ENCODE measurements at regions of chr5 and their contacts with region 1.

Region 1: GRCh38 chr5:143824851-143825720 is 13.1 kb downstream of the HMHB1 start:
- DNase-seq: peak; percentile 81
- ATAC-seq: peak; percentile 99

Region 2: DNA sequence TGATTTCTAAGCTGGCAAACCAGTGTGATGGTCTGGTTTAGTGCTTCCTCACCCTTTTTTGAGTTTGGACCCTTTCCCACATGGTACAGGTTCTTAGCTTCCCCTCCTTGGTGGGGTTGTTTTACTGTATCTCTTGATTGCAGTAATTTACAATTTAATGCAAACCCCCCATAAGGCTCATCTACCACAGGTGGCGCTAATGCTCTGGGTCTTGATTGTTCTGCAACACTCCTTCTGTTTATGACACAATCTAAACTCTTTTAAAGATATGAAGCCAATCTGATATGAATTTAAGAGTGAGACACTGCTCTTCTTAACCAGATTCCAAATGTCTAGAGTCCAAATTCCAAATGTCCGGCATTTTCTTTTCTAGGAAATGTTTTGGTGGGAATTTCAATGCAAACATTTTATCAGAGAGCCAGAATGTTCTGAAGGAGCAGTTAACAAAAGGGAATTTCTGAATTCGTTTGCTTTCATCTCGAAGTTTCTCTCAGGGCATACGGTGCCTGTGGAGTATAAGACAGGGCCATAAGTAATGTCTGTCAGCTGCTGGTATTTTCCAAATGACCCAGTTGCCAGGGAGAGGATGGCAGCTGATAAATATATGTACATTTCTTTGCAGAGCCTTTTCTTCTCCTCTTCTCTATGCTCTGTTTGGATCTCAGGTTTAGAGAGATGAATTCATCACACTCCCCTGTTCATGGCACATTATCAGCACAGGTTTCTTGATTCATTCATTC is 808.1 kb before region 1 on chr5:
- intact Hi-C with region 1: loop called (anchors 10 kb)
- DNase-seq: no peak
- ATAC-seq: no peak

Region 3: GRCh38 chr5:143074414-143074996 is 750.6 kb before region 1 on chr5:
- intact Hi-C with region 1: loop called (anchors 10 kb)
- DNase-seq: no peak
- ATAC-seq: no peak

Region 4: DNA sequence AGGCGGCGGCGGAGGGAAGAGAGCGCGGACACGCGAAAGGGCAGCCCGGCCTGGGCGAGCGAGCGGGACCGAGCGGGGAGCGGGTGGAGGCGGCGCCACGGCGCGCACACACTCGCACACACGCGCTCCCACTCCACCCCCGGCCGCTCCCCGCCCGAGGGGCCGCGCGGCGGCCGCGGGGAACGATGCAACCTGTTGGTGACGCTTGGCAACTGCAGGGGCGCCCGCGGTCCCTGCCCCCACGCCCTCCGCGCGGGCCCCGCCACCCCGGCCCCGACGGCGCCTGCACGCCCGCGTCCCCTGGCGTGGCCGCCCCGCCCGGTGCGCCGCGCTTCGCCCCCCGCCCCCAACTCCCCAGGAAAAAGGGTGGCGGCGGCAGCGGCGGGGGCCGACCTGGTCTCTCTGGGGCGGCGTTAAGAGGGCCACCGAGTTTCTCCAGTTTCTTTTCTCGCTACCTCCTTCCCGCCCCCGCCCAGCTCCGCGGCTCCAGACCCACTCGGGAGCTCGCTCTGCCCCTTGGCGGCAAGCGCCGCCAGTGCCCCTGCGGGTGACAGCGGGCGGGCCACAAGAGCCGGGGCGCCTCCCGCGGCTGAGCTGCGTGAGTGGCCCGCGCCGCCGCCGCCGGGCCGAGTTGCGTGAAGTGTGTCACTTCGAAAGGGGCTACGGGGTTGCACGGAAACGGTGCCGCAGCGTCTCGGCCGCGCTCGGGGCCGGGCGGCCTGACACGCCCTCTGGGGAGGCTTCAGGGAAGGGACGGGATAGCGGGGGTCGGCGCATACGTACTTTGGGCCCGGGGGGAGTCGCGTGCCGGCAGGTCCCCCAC is 421.3 kb before region 1 on chr5 and contains the start of gene NR3C1:
- intact Hi-C with region 1: loop called (anchors 10 kb)
- DNase-seq: peak; percentile 95
- ATAC-seq: peak; percentile 80
- total RNA-seq, gene NR3C1: 53.0 TPM

Region 5: DNA sequence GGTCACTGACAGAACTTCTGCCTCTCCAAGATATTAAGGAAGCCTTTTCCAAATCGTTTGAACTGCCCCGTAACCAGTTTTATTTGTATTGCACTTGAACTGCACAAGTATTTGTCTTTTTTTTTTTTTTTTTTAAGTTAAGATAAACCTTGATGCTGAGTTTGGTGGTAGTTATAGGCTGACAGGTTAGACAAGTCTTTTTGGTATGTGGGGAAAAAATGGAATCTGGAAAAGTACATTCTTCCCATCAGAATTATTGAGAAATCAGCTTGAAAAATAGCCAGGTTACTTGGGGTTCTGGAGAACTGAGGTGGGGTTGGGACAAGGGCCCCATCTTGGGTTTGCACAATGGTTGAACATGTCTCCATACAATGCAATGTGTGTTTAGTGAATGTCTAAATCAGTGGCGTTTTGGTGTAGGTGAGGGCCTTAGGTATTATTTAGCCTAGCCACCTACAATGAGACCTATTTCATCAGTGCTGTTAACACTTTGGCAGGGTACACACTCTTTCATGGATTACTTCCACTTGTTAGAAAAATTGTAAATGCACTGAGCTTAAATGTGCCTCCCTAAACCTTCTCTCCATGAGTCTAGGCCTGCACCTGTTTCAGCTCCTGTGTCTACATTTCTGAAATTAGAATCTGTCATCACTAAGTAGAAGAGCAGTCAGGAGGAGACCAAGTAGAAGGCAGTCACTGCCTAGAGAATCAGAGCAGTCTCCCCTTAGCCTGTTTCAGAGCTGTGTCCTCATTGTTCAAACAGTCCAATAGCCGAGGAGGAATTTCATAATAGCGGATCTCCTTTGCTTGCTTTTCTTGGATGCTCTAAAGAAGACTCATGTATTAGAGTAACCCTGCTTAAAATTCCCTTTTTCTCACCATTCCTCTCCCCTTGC is 153.2 kb before region 1 on chr5:
- intact Hi-C with region 1: no loop called
- DNase-seq: no peak
- ATAC-seq: peak; percentile 30

Region 6: GRCh38 chr5:143896966-143897365 is 71.9 kb after region 1 on chr5:
- intact Hi-C with region 1: no loop called
- DNase-seq: no peak
- ATAC-seq: no peak